ENCODE measurements at regions of chr3 and their contacts with region 1.

Region 1: GRCh38 chr3:109731620-109732473 is 394.5 kb upstream of the DPPA4 start:
- DNase-seq: peak; percentile 65
- H3K4me3 ChIP-seq: no peak overlapping the region
- H3K27ac ChIP-seq: no peak overlapping the region
- H3K4me1 ChIP-seq: no peaks in the 10 kb centered on the region
- H3K27me3 ChIP-seq: no peaks in the 10 kb centered on the region

Region 2: DNA sequence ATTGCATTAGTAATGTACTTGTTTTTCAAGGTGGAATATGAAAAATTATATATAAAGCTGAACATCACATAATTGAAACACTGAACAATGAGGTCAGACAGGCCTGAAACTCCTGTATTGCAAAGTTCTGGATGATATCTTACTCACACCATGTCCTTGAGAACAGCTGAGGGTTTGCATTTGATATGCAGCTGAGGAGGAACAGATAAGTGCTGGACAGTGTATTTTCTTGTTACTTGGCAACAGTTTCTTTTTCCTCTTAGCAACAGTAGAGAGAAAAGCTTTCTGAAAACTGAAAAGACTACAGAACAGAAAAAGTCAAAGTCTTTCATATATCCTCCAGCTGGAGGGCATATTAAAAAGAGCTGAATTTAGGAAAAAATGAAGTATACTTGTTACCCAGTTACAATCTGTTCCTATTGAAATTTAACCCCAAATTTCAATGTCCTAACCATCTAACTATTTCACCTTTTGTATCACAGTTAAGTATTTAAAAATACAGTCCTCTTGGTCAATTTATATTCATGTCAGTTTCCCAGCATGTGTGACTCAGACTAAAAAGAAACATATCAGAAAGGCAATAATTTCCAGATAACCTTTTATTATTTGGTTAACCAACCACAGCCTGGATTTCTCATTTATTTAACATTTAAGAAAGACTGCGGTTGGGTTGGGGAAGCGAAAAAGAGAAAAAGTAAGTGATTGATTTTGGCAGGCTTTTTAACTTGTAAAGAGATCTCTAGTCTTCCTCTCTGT is 338.5 kb after region 1 on chr3:
- in situ Hi-C with region 1: no loop called
- DNase-seq: peak; percentile 32
- H3K4me3 ChIP-seq: no peak overlapping the region
- H3K27ac ChIP-seq: no peak overlapping the region
- H3K4me1 ChIP-seq: peaks cover 4% of the 10 kb centered on the region; the same call in 1 of the 2 replicates
- H3K27me3 ChIP-seq: no peaks in the 10 kb centered on the region

Region 3: DNA sequence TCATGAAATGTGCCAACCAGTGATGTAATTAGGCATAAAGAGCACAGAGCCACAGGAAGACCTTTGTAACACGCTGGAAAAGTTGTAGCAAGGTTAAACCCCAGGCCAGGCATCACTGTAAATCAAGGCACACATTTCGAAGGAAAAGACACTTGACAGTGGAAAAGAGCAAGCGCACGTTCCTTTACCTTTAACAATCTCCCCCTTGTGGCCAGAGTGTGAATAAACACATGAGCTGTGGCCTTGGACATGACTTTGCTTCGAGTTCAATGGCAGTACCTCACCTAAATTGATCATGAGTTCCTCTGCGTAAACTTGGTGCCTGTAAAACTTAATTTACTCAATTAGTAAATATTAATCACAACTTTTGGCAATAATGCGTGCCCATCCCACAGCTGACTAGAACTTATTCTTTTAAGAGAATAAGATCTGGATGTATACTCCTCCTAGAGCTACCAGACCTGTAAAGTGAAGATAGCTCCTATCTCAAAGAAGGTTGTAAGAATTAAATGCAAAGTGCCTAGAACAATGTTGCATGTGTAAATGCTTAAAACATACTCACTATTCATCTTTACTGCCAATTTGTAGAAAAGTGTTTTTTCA is 582.8 kb after region 1 on chr3:
- in situ Hi-C with region 1: loop called (anchors 10 kb)
- DNase-seq: peak; percentile 78
- H3K4me3 ChIP-seq: no peak overlapping the region
- H3K27ac ChIP-seq: no peak overlapping the region
- H3K4me1 ChIP-seq: peaks cover 10% of the 10 kb centered on the region; the same call in 1 of the 2 replicates
- H3K27me3 ChIP-seq: no peaks in the 10 kb centered on the region

Region 4: GRCh38 chr3:111071257-111072015 is 1339.6 kb after region 1 on chr3 and contains the start of gene NECTIN3:
- in situ Hi-C with region 1: loop called (anchors 25 kb)
- DNase-seq: peak; percentile 98
- H3K4me3 ChIP-seq: peak within 1 kb of the TSS; percentile 95
- H3K27ac ChIP-seq: peak within 1 kb of the TSS; percentile 79
- H3K4me1 ChIP-seq: peaks cover 8% of the 10 kb centered on the region
- H3K27me3 ChIP-seq: no peaks in the 10 kb centered on the region
- total RNA-seq, gene NECTIN3: 111 and 125 TPM in 2 replicates

Measured in GM23248 (cell line).